Esophagus squamous epithelium (tissue), 5 donors: ENCODE measurements at regions of chr11 and their contacts with region 1.

Region 1: DNA sequence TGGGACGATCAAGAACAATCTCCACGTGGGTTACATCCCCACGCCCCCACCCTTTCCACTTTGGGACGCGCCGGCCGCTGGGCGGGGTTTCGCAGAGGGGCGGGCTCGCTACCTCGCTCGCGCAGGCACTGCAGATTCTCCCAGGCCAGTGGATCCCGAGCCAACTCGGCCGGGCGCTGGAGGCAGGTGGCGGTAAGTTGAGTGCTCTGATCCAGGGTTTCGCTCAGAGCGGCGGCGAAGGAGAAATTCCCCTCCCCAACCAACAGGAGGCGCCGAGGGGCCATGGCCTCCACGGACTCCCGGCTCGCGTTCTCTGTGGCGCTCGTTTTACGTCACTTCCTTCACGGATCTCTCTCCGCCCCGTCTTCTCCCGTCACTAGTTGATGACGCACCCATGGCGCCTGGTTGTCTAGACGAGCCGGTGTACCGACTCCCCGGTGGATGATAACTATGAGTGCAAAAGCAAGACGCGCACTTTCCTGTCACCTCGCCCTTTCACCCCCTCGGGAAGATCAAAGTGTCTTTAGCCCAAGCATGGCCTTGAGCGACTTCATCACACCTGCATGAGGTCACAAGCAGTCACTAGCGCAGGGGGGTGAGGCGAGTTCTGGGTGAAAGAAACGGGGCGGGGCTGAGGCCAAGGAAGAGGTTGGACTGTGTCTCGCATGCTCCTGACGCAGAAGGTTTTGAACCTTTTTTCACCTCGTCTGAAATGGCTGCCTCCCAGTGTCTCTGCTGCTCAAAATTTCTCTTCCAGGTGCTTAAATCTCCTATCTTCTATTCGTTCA is at the starts of genes CFAP68 and FDXACB1:
- DNase-seq: peak; percentile 88
- H3K4me3 ChIP-seq: peak within 1 kb of the TSS; percentile 41 to 75 (median 57)
- H3K27ac ChIP-seq: peak within 1 kb of the TSS; percentile 93 to 96 (median 94)
- H3K4me1 ChIP-seq: peaks cover 6 to 23% (median 7%) of the 10 kb centered on the region in 3 donors
- H3K27me3 ChIP-seq: no peaks in the 10 kb centered on the region
- CTCF ChIP-seq: peak; percentile 81 to 99 (median 98)
- POLR2A ChIP-seq: peak in 2 of 4 donors; percentile 25 to 65
- total RNA-seq, gene CFAP68: 12.7 to 28.8 (median 17.7) TPM
- total RNA-seq, gene FDXACB1: 1.1 to 3.3 (median 2.8) TPM

Region 2: DNA sequence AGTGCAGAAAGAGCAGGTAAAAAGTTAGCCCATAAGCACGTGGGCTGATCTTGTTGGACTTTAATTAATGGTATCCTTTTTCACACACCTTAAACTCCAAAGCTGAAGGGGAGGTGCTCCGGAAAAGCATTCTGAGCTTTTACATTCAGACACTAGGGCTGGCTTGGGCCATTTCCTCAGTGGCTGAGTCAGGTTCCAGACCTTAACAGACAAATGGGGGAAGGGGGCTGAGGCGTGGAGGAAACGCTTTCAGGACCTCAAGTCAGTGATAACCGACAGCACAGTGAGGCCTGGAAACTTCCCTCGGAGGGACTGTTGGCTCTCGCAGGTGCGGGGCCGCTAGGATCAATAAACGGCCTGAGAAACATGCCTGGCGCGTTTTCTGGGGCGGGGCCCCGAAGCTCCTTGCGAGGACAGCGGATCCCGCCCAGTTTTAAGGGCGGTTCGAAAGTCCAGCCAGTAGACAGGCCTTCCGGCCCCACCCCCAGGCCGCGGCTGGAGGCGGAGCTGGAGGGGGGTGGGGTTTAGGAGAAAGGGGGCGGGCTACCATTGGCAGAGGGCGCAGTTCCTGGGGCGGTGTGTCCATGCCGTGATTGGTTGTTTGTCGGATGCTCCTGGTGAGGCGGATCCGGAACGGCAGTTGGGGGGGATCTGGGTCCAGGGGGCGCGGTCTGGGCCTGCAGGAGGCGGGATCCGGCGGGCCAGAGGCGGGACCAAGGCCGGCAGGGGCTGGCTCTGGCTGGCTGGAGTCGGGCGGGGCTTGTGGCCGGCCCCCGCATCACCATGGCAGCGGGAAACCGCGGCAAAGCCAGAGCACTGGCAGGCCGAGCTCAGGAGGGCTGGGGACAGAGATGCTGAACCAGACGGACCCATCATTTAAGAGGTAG is 47.7 kb after region 1 on chr11:
- intact Hi-C with region 1: loop called (anchors 10 kb)
- DNase-seq: peak; percentile 98
- H3K4me3 ChIP-seq: peak overlapping the region; percentile 28 to 64 (median 41)
- H3K27ac ChIP-seq: peak overlapping the region; percentile 86 to 93 (median 92)
- H3K4me1 ChIP-seq: peaks cover 23 to 56% (median 29%) of the 10 kb centered on the region in 3 donors
- H3K27me3 ChIP-seq: no peaks in the 10 kb centered on the region
- CTCF ChIP-seq: peak in 2 of 6 experiments; percentile 30 to 38
- POLR2A ChIP-seq: peak in 1 of 4 donors; percentile 61

Region 3: DNA sequence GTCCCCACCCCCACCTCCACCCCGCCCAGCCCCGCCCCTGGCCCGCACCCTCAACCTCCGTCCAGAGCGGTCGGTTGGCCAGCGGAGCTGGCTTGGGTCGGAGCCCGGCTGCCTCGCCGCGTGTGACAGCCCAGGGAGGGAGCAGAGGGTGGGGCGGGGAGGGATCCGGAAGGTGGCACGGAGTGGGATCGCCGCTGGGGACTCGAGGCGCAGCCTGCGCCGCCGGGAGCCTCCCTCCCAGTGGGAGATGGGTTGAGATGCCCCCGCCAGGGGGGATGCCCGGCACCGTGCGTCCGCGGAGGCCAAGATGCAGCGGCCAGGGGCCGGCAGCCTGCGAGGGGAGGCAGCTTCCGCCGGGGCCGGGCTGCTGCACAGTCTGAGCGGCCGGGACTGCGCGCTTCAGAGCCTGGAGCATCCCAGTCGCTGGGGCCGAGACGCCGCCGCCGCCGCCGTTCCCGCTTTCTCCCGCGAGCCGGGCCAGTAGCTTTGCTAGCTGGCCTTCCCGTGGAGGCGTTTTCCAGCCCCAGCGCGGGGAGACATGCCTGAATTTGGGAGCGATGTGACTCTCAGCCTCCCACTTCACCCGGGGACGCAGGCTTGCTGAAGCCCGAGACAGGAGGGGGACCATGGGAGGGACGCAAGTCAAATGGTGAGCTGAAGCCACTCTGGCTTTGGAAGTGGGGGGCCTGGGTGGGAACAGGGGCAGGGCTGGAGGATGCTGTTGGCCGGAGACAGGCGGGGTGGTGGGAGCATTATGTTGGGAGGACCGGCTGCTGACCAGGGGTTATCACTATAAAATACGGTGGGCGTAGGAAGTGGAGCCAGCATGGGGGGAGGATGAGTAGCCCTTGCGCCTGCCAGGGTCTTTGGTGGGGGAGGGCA is 98.3 kb after region 1 on chr11:
- intact Hi-C with region 1: loop called (anchors 5 kb)
- DNase-seq: no peak
- H3K4me3 ChIP-seq: peak overlapping the region; percentile 61 to 89 (median 62)
- H3K27ac ChIP-seq: peak overlapping the region; percentile 71 to 96 (median 90)
- H3K4me1 ChIP-seq: peaks cover 10 to 67% (median 25%) of the 10 kb centered on the region in 3 donors
- H3K27me3 ChIP-seq: no peaks in the 10 kb centered on the region
- CTCF ChIP-seq: peak in 1 of 6 experiments; percentile 6
- POLR2A ChIP-seq: peak in 2 of 4 donors; percentile 42 to 50